ENCODE measurements at regions of chr11 and their contacts with region 1.

Region 1: DNA sequence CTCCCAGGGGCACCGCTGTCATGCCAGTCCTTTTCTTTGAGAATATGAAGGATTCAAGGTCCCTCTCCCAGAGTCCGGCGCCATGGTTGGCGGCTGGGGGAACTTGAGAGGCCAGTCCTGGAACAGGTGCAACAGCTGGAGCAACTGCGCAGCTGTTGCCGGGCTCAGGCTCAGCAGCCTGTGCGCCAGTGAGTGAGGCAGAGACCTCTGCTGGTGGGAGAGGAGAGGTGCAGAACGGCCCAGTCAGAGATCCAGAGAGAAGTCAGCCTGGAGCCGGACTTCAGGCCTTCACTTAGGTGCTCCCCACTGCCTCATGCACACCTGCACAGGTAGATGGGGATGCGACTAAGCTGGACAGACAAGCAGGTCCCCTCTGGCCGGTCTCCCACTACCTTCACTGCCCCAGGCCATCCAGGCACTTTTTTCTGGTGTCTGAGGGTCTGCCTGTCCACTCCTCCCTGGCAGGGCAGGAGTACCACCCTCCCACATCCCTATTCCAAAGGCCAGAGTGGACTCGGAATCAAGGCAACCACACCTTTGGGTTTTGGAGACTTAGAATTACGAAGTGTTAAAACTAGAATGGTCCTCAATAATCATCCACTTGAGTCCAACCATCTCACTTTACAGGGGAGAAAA is 4.6 kb downstream of the CHRDL2 start:
- DNase-seq: peak; percentile 87
- CTCF ChIP-seq: peak; percentile 94

Region 2: GRCh38 chr11:74611369-74611861 is 115.2 kb before region 1 on chr11:
- CTCF ChIA-PET with region 1: interaction called, 12 read pairs
- POLR2A ChIA-PET with region 1: no interaction called
- DNase-seq: peak; percentile 31
- CTCF ChIP-seq: peak; percentile 34

Region 3: DNA sequence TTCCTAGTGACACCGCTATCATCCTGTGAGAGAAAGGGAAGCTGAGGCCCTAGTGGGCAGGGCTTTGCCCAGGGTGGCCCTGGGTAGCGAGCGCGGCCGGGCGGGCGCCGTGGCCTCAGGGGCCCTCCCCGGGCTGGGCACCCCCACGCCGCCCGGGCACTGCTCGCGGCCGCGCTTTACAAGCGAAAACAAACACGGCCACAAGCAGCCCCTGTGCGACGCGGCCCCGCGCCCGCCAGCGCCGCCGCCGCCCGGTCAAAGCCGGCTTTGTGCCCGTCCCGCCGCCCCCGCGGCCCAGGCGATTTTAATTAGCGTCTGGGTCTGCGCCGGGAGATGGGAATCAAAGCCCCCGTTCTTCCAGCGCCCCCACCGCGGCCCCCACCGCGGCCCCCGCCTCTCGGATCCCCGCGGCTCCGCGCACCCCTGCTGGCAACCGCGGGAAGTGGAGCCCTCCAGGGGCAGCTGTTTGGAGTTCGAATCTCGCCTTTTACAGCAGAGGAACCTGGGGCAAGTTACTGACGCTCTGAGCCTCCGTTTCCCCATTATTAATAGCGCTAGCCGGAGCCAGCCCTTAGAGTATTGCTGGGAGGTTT is 43.3 kb before region 1 on chr11:
- CTCF ChIA-PET with region 1: interaction called, 10 read pairs
- POLR2A ChIA-PET with region 1: no interaction called
- DNase-seq: no peak
- CTCF ChIP-seq: peak; percentile 12

Region 4: GRCh38 chr11:74696932-74697687 is 29.6 kb before region 1 on chr11:
- CTCF ChIA-PET with region 1: interaction called, 76 read pairs
- POLR2A ChIA-PET with region 1: no interaction called
- DNase-seq: no peak
- CTCF ChIP-seq: no peak

Region 5: GRCh38 chr11:74702383-74703007 is 24.2 kb before region 1 on chr11:
- CTCF ChIA-PET with region 1: interaction called, 76 read pairs
- POLR2A ChIA-PET with region 1: no interaction called
- DNase-seq: peak; percentile 83
- CTCF ChIP-seq: peak; percentile 94

Region 6: DNA sequence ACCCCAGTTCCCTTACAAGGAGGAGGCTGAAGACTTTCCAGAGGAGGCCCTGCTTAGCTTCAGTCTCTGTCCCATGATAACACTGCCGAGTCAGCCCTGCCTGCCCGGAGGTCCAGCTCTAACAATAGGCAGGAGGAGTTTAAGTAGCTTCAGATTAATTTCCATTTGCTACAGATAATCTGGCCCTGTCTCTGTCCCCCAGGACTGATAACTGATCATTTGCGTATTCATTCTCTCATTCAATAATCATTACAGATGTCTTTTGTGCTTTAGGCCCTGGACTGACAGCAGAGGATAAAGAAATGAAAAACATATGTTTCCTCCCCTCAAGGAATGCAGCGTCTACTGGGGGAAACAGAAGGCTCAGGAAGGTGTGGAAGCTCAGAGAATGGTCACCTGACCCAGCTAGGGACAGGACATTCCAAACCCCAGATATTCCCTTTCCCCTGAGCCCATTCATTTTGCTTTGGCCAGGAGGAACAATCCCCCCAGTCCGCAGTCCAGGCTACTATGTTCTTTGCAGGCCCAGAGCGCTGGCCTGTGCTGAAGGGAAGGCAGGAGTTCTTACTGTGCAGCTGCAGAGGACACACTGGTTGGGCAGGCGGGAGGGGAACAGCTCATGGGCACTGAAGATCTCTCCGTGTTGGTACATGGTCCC is 16.3 kb before region 1 on chr11:
- CTCF ChIA-PET with region 1: interaction called, 35 read pairs
- POLR2A ChIA-PET with region 1: no interaction called
- DNase-seq: no peak
- CTCF ChIP-seq: no peak

Region 7: DNA sequence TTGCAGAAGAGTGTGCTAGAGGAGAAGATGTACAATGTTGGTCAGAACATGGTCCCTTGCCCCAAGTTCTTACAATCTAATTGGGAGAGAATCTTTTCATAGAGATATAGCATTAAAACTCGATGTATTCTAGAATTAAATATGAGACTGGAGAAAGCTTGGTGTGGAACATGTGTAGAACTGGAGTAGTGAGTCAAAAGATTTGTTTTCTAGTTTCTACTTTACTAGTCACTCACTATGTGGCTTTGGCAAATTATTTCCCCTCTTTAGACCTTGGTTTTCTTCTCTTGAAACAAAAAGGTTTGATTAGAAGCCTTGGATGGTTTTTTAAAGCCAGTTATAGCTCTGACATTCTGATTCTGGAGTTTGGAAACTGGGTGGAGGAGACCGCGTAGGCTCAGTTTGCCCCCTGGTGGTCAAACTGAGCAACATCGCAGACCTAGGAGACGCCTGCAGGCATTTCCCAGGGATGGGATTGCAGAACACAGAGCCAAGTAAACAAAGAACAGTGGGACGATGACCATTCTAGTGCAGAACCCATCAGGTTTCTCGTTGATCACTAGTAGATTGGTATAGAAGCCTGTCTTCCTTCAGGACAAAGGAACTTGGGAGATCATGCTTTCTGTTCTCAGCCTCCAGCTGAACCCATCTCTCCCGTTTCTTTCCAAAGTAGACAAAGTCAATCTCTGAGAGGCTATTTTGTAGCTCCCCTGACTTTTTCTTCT is 13.0 kb after region 1 on chr11:
- CTCF ChIA-PET with region 1: interaction called, 129 read pairs
- POLR2A ChIA-PET with region 1: no interaction called
- DNase-seq: peak; percentile 76
- CTCF ChIP-seq: peak; percentile 91

Measured in GM10248 (cell line).